Activated CD4-positive, alpha-beta T cell treated with anti-CD3 and anti-CD28 coated beads, Interleukin-2, amount 10 ng/mL, durations not matched to agents 7 days and 5 days (primary cell): ENCODE measurements at regions of chr18 and their contacts with region 1.

Region 1: DNA sequence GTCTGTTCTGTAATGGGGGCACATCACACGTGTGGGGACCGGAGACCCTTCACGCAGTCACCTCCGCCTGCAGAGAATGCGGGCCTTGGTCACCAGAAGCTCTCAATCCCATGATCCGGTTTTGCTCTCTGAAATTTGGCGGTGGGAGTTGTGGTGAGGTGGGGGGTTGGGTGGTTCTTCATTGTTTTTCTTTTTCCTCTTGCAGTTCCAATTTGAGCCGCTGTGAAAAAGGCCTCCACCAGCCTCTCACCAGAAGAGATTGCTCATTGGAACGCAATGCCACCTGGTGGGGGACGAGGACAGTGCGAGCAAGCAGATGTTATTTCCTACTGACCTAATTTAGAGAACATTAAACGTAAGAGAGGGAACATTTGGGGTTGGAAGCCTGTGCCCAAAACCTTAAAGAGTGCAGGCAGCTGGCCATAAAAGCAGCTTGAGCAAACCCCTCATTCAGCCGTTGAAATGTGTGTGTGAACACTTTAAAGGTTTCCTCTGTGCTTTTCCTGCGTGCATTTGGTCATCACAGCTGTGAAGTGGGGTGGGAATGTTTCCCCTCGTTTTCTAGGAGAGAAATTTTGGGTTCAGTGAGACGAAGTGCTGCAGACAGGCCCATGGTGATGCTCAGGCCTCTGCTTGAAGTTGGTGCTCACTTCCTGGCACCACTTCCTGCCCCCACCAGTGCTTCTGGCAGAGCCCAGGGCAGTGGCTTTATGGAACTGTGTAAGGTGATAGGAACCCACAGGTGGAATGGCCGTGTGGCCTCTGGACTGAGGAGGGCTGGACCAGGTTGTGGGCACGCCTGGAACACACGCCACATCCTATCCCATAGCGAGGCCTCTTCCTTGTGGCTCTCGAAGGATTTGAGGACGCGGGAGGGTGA is 61.7 kb downstream of the ZCCHC2 start:
- DNase-seq: peak; percentile 89
- H3K4me3 Mint-ChIP-seq: peak overlapping the region; percentile 0
- H3K27ac Mint-ChIP-seq: peak overlapping the region; percentile 91
- H3K4me1 Mint-ChIP-seq: peaks cover 48% of the 10 kb centered on the region
- H3K27me3 Mint-ChIP-seq: no peaks in the 10 kb centered on the region

Region 2: DNA sequence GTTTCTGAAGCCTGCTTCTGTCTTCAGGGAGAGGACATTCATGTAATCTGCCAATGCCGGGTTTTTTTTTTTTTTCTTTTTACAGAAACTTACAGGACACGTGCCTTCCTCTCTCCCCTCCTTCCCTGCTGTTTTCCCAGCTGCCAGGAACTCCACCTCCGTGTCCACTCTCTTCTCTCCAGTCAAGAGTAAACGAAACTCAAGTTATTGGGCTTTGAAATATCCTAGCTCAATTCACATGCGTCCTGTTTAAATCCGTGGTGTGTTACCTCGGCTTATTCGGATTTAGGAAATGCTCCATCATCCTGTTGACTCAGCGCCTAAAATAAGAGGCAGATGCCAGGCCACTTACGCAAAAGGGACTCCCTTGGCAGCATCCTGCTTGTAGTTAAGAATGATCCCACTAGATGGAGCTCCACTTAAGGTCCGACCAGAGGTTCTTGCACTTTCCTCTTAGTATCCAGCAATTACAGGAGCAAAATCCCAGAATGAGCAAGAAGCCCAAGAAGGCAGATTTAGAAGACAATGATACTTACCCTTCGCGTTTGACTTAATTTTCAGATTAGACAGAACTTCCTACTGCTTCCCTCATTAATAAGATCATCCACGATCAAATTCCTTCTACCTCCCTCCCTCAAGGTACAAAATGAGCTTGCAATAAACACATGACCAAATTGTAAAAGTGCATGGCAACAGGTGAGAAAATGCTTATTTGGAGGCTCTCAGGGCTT is 158.9 kb before region 1 on chr18:
- CTCF ChIA-PET with region 1: interaction called, 10 read pairs
- POLR2A ChIA-PET with region 1: no interaction called
- DNase-seq: peak; percentile 81
- H3K4me3 Mint-ChIP-seq: no peak overlapping the region
- H3K27ac Mint-ChIP-seq: no peak overlapping the region
- H3K4me1 Mint-ChIP-seq: peaks cover 45% of the 10 kb centered on the region
- H3K27me3 Mint-ChIP-seq: peaks cover 2% of the 10 kb centered on the region

Region 3: DNA sequence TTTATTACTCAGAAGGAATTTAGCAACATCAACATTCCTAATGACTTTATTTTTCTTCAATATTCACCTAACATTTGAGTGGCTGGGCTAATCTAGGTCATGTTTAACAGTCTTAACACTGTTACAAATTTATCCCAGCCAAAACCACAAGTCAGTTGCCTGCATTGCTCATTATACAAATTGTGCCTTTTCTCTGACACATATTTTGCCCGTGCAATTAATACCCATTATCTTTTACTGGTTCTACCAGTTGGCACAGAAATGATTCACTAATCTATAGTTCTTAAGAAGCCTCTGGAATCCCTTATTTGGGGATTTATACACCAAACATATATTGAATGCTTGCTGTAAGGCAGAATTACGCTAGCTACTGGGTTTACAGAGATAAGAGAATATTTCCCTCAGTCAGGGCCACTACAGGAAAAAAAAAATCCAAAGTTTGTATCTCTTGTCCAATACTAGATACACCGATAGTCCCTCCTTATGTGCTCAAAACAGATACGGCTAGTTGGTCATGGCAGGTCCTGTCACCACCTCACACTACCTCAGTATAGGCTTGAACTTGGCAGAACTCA is 15.3 kb before region 1 on chr18:
- CTCF ChIA-PET with region 1: interaction called, 10 read pairs
- POLR2A ChIA-PET with region 1: no interaction called
- DNase-seq: no peak
- H3K4me3 Mint-ChIP-seq: no peak overlapping the region
- H3K27ac Mint-ChIP-seq: no peak overlapping the region
- H3K4me1 Mint-ChIP-seq: peaks cover 11% of the 10 kb centered on the region
- H3K27me3 Mint-ChIP-seq: no peaks in the 10 kb centered on the region